ENCODE measurements at regions of chr7 and their contacts with region 1.

Region 1: DNA sequence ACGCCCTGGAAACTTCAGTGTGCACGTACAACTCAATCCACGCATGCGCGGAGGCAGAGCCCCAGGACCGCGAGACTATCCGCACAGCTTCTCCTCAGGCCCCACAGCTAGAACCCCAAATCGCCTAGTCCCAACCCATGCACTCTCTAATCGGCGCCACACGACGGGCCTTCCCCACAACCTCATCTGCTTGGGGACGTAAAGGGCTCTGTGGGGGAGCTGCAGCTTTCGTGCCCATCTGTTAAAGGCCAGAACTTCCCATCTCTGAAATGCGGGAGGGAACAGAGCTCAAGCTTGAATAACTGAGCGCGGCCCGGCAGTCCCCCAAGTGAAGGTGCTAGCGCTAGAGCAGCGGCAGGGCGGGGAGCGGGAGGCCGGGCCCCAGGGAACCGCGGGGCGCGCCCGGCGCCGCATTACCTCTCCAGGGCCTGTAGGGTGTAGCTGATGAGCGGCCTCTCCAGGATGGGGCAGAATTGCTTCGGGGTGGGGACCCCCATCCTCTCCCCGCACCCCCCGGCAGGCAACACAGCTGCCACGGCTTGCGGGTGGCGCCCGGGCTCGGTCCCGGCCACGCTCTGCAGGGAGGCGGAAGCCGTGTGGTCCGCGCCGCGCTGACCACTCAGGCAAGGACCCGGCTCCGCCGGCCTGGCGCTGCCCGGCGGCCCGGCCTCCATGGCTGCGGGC is 547 bp downstream of the CRPPA start:
- DNase-seq: peak; percentile 92
- H3K4me3 ChIP-seq: peak overlapping the region; percentile 50 to 66 (median 54)
- H3K27ac ChIP-seq: peak overlapping the region; percentile 82
- H3K4me1 ChIP-seq: peaks cover 13% of the 10 kb centered on the region
- H3K27me3 ChIP-seq: no peaks in the 10 kb centered on the region
- CTCF ChIP-seq: peak in 1 of 2 donors; percentile 38
- POLR2A ChIP-seq: peak; percentile 88

Region 2: DNA sequence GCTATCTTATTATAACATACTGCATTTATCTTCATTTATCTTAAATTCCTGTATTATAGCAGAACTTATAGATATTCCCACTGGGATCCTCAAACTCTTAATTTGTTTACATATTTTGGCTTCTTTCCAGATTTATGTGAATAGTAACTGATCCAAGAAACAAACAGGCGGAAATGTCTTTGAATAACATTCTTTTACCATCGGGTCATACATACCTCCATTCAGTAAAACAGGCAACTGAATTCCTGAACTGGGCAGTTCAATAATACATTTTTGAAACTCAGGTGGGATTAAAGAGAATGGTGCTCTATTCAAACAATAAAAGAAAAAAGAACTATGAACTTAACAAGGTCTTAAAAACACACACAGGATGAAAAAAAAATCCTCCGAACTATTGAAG is 336.9 kb before region 1 on chr7:
- CTCF ChIA-PET with region 1: no interaction called
- POLR2A ChIA-PET with region 1: no interaction called
- dilution Hi-C with region 1: no loop called
- intact Hi-C with region 1: loop called (anchors 10 kb)
- DNase-seq: peak; percentile 85
- H3K4me3 ChIP-seq: no peak overlapping the region
- H3K27ac ChIP-seq: peak overlapping the region; percentile 84
- H3K4me1 ChIP-seq: peaks cover 42% of the 10 kb centered on the region
- H3K27me3 ChIP-seq: no peaks in the 10 kb centered on the region
- CTCF ChIP-seq: no peak
- POLR2A ChIP-seq: no peak

Region 3: DNA sequence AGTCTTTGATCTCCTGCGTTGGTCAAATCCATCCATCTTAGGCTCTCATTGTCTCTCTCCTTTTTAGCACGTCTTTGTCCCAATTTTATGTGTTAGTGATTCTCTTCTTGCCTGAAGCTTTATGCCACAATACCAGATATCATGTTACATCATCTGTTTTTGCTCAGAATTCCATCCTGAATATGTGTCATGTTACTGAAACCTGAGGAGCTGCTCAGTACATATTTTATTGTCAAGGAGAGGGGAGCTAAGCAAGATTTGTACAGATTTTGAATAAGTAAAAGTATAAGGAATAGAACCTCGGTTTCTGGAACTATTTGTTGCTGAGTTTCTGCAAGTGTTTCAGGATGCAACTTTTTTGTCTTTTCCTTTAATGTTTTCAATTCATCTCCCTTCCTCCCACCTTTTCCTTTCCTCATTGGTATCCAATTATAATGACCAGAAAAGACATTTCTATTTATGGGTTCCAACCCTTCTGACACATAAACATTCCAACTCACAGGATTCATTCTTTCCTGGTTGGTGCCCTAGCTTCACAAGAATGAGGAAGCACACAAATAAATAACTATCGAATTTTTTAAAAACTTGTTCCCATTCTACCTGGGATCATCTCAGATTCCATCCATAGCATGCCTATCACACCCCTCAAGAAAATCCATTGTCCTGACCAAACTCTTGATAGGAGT is 291.2 kb before region 1 on chr7:
- CTCF ChIA-PET with region 1: no interaction called
- POLR2A ChIA-PET with region 1: no interaction called
- dilution Hi-C with region 1: no loop called
- intact Hi-C with region 1: loop called (anchors 5 kb)
- DNase-seq: peak; percentile 55
- H3K4me3 ChIP-seq: no peak overlapping the region
- H3K27ac ChIP-seq: peak overlapping the region; percentile 47
- H3K4me1 ChIP-seq: peaks cover 22% of the 10 kb centered on the region
- H3K27me3 ChIP-seq: no peaks in the 10 kb centered on the region
- CTCF ChIP-seq: no peak
- POLR2A ChIP-seq: no peak

Region 4: DNA sequence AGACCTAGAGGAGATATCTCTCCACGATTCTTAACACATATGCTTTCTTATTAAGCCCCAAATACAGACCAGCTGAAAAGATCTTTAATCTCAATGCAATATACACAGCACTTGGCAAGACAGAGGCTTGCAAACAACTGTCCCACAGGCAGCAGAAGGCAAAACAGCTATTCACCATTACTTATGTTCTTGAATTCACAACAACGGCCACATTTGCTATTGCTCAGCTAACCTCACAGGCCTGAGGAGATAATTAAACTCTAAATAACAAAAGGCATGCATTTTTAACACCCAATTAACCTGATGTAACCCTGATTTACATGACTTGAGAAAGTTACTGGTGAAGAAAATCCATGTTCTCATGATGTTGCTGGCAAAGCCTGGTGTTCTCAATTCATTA is 215.8 kb before region 1 on chr7:
- CTCF ChIA-PET with region 1: no interaction called
- POLR2A ChIA-PET with region 1: no interaction called
- dilution Hi-C with region 1: no loop called
- intact Hi-C with region 1: no loop called
- DNase-seq: no peak
- H3K4me3 ChIP-seq: no peak overlapping the region
- H3K27ac ChIP-seq: no peak overlapping the region
- H3K4me1 ChIP-seq: peaks cover 16% of the 10 kb centered on the region
- H3K27me3 ChIP-seq: no peaks in the 10 kb centered on the region
- CTCF ChIP-seq: no peak
- POLR2A ChIP-seq: no peak

Region 5: GRCh38 chr7:16309129-16309528 is 111.7 kb before region 1 on chr7:
- CTCF ChIA-PET with region 1: no interaction called
- POLR2A ChIA-PET with region 1: no interaction called
- dilution Hi-C with region 1: no loop called
- intact Hi-C with region 1: no loop called
- DNase-seq: no peak
- H3K4me3 ChIP-seq: no peak overlapping the region
- H3K27ac ChIP-seq: no peak overlapping the region
- H3K4me1 ChIP-seq: no peaks in the 10 kb centered on the region
- H3K27me3 ChIP-seq: no peaks in the 10 kb centered on the region
- CTCF ChIP-seq: no peak
- POLR2A ChIP-seq: no peak

Region 6: GRCh38 chr7:16431646-16432424 is 11.0 kb after region 1 on chr7:
- CTCF ChIA-PET with region 1: interaction called, 13 read pairs
- POLR2A ChIA-PET with region 1: no interaction called
- dilution Hi-C with region 1: no loop called
- intact Hi-C with region 1: no loop called
- DNase-seq: peak; percentile 18
- H3K4me3 ChIP-seq: no peak overlapping the region
- H3K27ac ChIP-seq: no peak overlapping the region
- H3K4me1 ChIP-seq: no peaks in the 10 kb centered on the region
- H3K27me3 ChIP-seq: no peaks in the 10 kb centered on the region
- CTCF ChIP-seq: peak in 1 of 2 donors; percentile 17
- POLR2A ChIP-seq: no peak

Measured in endothelial cell of umbilical vein (primary cell).